Activated CD8-positive, alpha-beta memory T cell treated with anti-CD3 and anti-CD28 coated beads, Interleukin-2, amount 10 ng/mL, durations not matched to agents 7 days and 5 days (primary cell): ENCODE measurements at regions of chr5 and their contacts with region 1.

Region 1: GRCh38 chr5:149345147-149345875 is at the start of gene GRPEL2:
- DNase-seq: peak; percentile 96
- ATAC-seq: peak; percentile 86
- H3K4me3 Mint-ChIP-seq: peak within 1 kb of the TSS; percentile 84
- H3K27ac Mint-ChIP-seq: peak within 1 kb of the TSS; percentile 95
- H3K4me1 Mint-ChIP-seq: peaks cover 51% of the 10 kb centered on the region
- H3K27me3 Mint-ChIP-seq: no peaks in the 10 kb centered on the region
- total RNA-seq, gene GRPEL2: 27.2 to 27.3 TPM

Region 2: DNA sequence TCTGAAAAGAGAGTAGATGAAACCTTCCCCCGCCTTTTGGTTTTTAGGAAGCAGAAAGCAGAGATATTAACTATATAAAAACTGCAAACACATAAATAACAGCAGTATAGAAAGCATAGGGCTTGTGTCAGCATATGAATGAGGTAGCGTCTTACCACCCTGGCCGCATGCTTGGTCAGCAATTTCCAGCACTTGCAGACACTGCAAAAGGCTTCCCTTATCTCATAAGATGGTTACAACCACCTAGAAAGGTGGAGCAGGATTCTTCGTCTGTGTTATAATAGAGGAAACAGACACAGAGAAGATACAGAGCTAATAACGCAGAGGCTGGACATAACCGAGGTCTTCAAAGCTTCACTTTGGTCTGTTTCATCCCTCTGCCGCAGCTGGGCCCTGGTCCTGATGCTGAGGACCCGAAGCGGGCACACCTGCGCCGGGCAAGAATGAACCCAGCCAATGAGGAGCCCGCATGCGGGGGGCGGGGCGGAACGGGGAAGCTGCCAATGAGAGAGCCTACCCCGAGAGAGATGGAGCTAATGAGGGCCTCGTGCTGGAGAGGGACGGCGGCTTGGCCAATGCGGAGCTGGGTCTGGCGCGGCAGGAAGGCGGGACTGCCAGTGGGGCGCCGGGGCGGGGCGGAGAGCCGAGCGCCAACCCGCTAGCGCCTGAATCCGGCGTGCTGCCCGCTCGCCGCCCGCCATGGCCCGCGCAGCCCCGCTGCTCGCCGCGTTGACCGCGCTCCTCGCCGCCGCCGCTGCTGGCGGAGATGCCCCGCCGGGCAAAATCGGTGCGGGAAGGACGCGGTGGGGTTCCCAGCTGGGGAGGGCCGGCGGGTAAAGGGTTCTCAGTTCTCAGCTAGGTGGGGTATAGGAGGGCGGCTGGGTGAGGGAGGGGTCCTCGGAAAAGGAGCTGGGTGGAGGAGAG is 12.3 kb after region 1 on chr5 and contains the start of gene PCYOX1L:
- CTCF ChIA-PET with region 1: interaction called, 45 read pairs
- DNase-seq: peak; percentile 97
- ATAC-seq: peak; percentile 99
- H3K4me3 Mint-ChIP-seq: peak within 1 kb of the TSS; percentile 99
- H3K27ac Mint-ChIP-seq: peak within 1 kb of the TSS; percentile 91
- H3K4me1 Mint-ChIP-seq: peaks cover 72% of the 10 kb centered on the region
- H3K27me3 Mint-ChIP-seq: no peaks in the 10 kb centered on the region
- total RNA-seq, gene PCYOX1L: 26.7 to 32.1 TPM